K562 (cell line): ENCODE measurements at regions of chr2 and their contacts with region 1.

Region 1: DNA sequence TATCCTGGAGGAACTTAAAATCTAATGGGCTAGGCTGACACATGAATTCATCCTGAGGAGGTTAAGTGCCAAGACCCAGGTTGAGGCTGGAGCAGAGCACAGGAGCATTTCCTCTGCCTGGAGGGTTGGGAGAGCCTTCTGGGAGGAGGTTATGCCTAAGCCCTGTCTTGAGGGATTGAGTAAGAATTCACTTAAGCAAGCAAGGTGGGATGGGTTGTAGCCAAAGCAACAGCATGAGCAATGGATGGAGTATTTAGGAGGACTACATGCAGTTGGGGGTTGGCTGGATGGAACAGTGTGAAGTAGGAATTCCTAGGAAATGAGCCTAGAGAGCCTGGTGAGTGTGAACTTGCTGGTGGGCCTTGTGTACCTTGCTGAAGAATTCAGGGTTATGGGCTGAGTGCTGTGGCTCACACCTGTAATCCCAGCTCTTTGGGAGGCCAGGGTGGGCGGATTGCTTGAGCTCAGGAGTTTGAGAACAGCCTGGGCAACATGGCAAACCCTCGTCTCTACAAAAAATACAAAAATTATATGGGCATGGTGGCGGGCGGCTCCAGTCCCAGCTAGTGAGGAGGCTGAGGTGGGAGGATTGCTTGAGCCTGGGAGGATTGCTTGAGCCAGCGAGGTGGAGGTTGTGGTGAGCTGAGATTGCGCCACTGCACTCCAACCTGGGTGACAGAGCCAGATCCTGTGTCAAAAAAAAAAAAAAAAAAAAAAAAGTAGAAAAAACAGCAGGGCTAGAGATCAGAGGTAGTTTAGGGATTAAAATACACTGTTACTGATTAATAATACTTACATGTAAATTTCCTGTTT is 22.2 kb downstream of the TANC1 start:
- DNase-seq: no peak
- ATAC-seq: no peak
- H3K4me3 ChIP-seq: no peak overlapping the region
- H3K27ac ChIP-seq: no peak overlapping the region
- H3K4me1 ChIP-seq: no peaks in the 10 kb centered on the region; a peak in 1 of 5 replicates
- H3K27me3 ChIP-seq: peaks cover 23 to 48% of the 10 kb centered on the region in 2 experiments
- CTCF ChIP-seq: no peak
- EP300 ChIP-seq: no peak
- POLR2A ChIP-seq: no peak
- RAD21 ChIP-seq: no peak

Region 2: GRCh38 chr2:159002462-159003111 is 12.0 kb after region 1 on chr2:
- CTCF ChIA-PET with region 1: no interaction called
- POLR2A ChIA-PET with region 1: interaction called, 11 read pairs
- in situ Hi-C with region 1: no loop called
- intact Hi-C with region 1: no loop called
- DNase-seq: no peak
- ATAC-seq: no peak
- H3K4me3 ChIP-seq: no peak overlapping the region
- H3K27ac ChIP-seq: no peak overlapping the region
- H3K4me1 ChIP-seq: no peaks in the 10 kb centered on the region
- H3K27me3 ChIP-seq: peaks cover 20 to 29% of the 10 kb centered on the region in 2 experiments; a peak in 3 of 5 replicates
- CTCF ChIP-seq: no peak
- EP300 ChIP-seq: no peak
- POLR2A ChIP-seq: no peak
- RAD21 ChIP-seq: no peak

Region 3: DNA sequence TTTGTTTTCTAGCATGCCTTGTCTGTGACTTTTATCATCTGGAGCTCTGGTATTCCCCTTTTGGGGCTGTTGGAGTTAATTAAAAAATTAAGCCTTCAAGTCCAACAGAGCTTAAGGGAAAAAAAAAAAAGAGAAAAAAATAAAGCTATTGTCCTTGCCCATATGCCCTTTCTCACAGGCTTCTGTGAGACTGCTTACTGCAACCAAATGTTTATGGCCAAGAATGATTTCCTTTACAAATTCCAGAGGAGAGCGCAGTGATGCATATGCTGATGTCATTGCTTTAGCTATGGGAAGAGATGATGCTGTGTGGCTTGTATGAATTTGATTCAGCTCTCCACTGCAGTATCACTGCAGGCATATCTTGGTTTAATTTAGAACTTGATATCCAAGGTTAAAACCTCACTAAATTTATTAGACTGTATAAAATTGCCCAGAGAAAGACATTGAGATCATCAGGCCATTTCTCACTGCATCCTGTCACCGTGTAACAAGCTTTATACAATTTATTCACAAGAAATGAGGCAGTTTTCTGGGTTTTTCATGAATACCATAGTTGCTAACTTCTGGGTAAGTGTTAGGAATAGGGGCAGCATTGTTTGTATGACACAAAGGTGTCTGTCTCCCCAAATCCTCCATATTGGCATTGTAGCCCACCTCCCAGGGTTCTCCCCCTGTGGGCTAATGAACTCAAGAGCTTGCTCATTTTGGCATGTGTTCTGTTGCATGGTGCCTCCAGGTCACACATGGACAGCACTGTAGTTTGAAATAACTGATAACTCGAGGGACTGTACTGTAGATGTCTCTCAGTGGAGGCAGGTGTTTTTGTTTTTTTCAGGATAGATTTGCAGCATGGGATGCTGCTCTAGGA is 62.8 kb after region 1 on chr2:
- CTCF ChIA-PET with region 1: no interaction called
- POLR2A ChIA-PET with region 1: no interaction called
- in situ Hi-C with region 1: no loop called
- intact Hi-C with region 1: no loop called
- DNase-seq: no peak
- ATAC-seq: no peak
- H3K4me3 ChIP-seq: no peak overlapping the region
- H3K27ac ChIP-seq: no peak overlapping the region
- H3K4me1 ChIP-seq: no peaks in the 10 kb centered on the region
- H3K27me3 ChIP-seq: peaks cover 25 to 30% of the 10 kb centered on the region in 2 experiments
- CTCF ChIP-seq: no peak
- EP300 ChIP-seq: no peak
- POLR2A ChIP-seq: no peak
- RAD21 ChIP-seq: no peak